Breast epithelium (tissue), 4 donors: ENCODE measurements at regions of chr17 and their contacts with region 1.

Region 1: DNA sequence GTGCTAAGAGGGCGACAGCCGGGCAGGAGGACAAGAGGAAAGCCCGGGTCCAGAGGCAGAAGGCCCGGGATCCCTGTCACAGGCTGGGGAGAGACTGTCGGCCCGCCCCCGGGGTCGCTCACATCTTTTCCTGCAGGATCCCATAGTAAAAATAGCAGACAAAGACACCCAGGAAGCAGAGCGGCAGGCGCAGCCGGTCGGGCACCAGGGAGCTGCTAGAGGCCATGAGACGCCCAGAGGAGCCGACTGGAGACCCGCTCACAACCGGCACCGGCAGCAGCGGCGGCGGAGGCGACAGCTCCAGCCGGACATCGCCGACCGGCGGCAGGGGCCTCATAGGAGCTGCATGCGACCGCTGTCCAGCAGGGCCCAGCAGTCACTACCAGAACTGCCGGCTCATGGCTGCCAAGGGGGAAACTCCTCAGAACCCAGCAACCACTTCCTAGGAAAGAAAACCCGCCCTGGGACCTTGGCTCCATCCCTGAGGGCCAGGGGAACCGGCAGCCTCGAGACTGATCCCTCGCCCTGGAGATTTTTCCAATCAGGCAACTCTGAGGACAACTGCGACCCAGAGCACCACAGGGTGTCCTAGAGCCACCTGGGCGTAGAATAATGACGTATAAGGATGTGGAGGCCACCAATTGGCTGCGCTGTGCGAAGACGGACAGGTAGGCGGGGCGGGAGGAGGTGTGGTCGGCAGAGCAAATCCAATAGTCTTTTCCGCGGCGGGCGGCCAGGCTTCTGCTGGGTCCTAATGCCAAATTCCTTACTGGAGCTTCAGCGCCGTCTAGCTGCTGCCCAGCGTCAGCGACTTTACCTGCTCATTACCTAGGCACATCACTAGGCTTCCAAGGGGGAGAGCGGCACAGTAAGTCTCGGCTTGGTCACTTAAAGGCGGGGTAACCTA is at the start of gene SLC35B1:
- DNase-seq: peak; percentile 98
- H3K4me3 ChIP-seq: peak within 1 kb of the TSS; percentile 78 to 97 (median 95)
- H3K27ac ChIP-seq: peak within 1 kb of the TSS; percentile 93 to 96
- H3K4me1 ChIP-seq: peaks cover 0 to 10% of the 10 kb centered on the region in 2 donors
- H3K27me3 ChIP-seq: no peaks in the 10 kb centered on the region
- CTCF ChIP-seq: peak; percentile 39 to 46 (median 44)
- POLR2A ChIP-seq: peak; percentile 30
- total RNA-seq, gene SLC35B1: 33.0 to 44.1 (median 35.7) TPM

Region 2: GRCh38 chr17:49851387-49852291 is 143.8 kb after region 1 on chr17:
- intact Hi-C with region 1: loop called (anchors 10 kb)
- DNase-seq: peak; percentile 40 to 72
- H3K4me3 ChIP-seq: peak overlapping the region; percentile 50 to 75 (median 63)
- H3K27ac ChIP-seq: peak overlapping the region; percentile 29 to 52
- H3K4me1 ChIP-seq: peaks cover 5 to 6% of the 10 kb centered on the region in 2 donors
- H3K27me3 ChIP-seq: no peaks in the 10 kb centered on the region
- CTCF ChIP-seq: peak; percentile 60 to 66 (median 61)
- POLR2A ChIP-seq: no peak